Activated T-helper 2 cell treated with anti-CD3 and anti-CD28 coated beads, Interferon-gamma antibody, Interleukin-2, Interleukin-4, amounts not matched to agents 10 μg/mL and 5 μg/mL and 100 μg/mL, durations not matched to agents 14 hours and 24 hours and 36 hours (primary cell): ENCODE measurements at regions of chr11 and their contacts with region 1.

Region 1: DNA sequence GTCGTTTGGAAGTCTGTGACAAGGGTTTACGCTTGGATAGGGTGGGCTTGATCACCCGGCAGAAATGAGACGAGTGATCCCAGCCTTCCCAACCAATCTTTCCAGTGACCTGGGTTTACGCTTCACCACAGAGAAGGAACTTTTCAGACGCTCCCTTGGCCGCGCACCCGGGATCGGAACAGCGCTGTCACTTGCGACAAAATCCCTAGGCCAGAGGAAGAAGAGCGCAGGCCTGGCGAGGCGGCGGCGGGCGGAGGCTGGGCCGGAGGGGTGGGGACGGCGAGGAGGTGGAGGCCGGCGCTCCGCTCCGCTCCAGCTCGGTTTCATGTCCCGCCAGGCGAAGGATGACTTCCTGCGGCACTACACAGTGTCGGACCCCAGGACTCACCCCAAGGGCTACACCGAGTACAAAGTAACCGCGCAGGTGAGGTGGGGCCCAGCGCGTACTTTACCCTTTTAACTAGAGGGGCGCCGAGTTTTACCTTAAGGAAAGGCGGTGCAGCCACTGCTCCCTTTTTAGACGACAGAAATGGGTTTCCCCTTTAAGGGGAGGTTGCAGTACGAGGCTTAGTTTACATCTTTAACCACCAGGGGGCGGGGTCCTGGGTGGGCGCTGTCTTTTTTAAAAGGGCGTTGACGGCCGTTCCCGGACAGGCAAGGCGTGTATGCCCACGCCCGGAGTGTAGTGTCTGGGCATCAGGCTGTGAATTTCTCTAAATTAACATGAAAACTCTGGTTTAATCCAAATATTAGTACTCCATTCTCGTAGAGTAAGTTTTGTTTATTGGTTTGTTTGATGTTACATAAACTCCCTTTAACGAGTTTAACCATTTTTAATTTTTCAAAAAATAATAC is at the start of gene SNX15:
- DNase-seq: peak; percentile 88
- H3K4me3 Mint-ChIP-seq: peak within 1 kb of the TSS; percentile 76
- H3K27ac Mint-ChIP-seq: peak within 1 kb of the TSS; percentile 87
- H3K4me1 Mint-ChIP-seq: peaks cover 15% of the 10 kb centered on the region
- H3K27me3 Mint-ChIP-seq: peaks cover 2% of the 10 kb centered on the region
- total RNA-seq, gene SNX15: 19.6 and 22.4 TPM in 2 replicates

Region 2: DNA sequence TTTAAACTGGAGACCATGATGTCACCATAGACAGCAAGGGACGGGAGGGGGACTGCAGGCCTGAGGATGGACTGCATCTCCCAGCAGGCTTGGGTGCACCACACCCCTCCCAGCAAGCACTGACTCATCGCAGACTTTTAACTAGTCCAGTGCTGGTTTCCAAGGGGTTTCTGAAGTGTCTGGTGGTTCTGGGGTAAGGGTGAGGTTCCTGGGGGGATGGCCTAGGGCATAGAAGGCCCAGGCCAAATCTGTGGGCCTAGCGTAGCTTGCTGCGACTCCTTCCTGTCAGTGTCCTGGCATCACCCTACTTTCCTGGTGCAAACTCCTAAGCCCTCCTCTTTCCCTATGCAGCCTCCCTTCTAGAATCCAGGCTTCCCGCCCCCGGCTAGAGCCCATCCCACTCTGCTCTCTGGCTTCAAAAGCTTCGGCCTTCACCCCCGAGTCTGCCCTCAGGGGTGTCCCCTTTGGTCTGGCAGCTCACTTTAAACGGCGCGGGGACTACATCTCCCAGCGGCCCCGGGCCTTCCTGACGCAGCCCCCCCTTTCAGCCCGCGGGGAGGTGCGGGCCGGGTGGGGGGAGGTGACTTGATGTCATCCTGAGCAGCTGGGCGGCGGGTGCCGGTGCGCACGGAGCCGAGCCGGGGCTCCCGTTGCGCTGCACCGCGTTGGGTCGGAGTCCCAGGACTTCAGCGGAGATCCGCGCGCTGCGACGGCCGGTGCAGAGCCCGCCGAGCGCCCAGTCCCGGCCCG is 103.2 kb before region 1 on chr11 and contains the start of gene PPP2R5B:
- intact Hi-C with region 1: loop called (anchors 1 kb)
- DNase-seq: peak; percentile 89
- H3K4me3 Mint-ChIP-seq: peak within 1 kb of the TSS; percentile 96
- H3K27ac Mint-ChIP-seq: peak within 1 kb of the TSS; percentile 100
- H3K4me1 Mint-ChIP-seq: peaks cover 12% of the 10 kb centered on the region
- H3K27me3 Mint-ChIP-seq: no peaks in the 10 kb centered on the region
- total RNA-seq, gene PPP2R5B: 13.6 and 16.1 TPM in 2 replicates

Region 3: GRCh38 chr11:65040847-65041621 is 13.6 kb after region 1 on chr11 and contains the start of gene SAC3D1:
- intact Hi-C with region 1: loop called (anchors 1 kb)
- DNase-seq: peak; percentile 94
- H3K4me3 Mint-ChIP-seq: peak within 1 kb of the TSS; percentile 88
- H3K27ac Mint-ChIP-seq: peak within 1 kb of the TSS; percentile 96
- H3K4me1 Mint-ChIP-seq: peaks cover 19% of the 10 kb centered on the region
- H3K27me3 Mint-ChIP-seq: no peaks in the 10 kb centered on the region
- total RNA-seq, gene SAC3D1: 17.0 and 18.6 TPM in 2 replicates